Activated CD8-positive, alpha-beta memory T cell treated with anti-CD3 and anti-CD28 coated beads, Interleukin-2, amount 10 ng/mL, durations not matched to agents 7 days and 5 days (primary cell): ENCODE measurements at regions of chr22 and their contacts with region 1.

Region 1: DNA sequence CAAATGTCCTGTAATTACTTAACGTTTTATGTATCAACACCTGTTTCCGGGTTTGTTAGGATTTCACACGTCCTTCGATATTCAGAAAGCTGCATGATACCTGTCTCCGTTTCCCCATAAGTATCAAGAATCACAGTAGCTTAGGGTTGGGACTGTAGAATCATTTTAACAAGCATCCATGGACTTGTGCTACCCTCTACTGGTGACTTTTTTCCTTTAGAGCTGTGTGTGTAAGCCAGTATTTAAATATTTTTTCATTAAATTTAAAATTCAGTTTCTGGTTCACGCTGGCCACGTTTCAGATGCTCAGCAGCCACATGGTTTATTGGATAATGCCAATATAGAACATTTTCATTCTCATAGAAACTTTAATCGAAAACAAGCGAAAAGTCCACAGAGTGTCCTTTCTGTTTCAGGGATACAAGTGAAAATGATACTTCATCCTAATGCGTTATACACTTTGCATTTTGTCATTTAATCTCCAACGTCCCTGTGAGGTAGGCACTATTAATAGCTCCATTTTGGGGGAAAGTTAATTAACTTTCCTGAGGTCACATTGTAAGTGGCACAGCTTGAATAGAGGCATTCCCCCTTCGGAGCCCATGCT is 61.5 kb upstream of the SLC25A18 start:
- DNase-seq: no peak
- ATAC-seq: peak; percentile 73
- H3K4me3 Mint-ChIP-seq: no peak overlapping the region
- H3K27ac Mint-ChIP-seq: no peak overlapping the region
- H3K4me1 Mint-ChIP-seq: no peaks in the 10 kb centered on the region
- H3K27me3 Mint-ChIP-seq: peaks cover 11% of the 10 kb centered on the region

Region 2: GRCh38 chr22:17077255-17077654 is 424.5 kb before region 1 on chr22:
- CTCF ChIA-PET with region 1: interaction called, 31 read pairs
- DNase-seq: no peak
- ATAC-seq: no peak
- H3K4me3 Mint-ChIP-seq: no peak overlapping the region
- H3K27ac Mint-ChIP-seq: no peak overlapping the region
- H3K4me1 Mint-ChIP-seq: peaks cover 17% of the 10 kb centered on the region
- H3K27me3 Mint-ChIP-seq: peaks cover 50% of the 10 kb centered on the region

Region 3: DNA sequence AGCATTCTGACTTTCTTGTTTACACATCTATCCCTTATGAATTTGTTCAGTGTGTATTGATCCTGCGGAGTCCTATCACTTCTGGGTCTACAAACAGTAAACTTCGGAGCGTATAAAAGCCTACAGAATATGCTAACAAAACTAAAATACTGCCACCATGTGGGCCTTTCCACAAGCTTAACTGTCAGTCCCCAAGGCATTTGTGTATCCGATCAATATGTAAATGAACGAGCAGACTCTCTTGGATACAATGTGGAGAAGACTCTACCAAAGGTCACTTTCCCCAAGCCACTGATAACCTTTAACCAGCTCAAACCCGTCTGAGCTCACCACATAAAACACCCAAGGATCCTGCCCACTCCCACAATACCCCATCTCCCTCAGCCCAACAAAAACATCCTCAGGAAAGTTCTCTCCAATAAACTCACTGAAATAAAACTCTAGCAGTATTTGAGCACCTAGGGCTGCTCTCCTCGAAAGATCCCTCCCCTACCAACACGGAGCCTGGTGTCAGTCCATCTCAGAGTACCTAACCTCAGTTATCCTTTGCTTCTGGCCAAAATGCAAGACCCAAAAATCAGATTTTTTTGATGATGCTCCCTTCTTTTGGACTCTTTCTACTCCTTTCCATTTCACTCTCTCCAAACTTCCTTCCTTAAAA is 300.4 kb before region 1 on chr22:
- CTCF ChIA-PET with region 1: interaction called, 11 read pairs
- DNase-seq: no peak
- ATAC-seq: no peak
- H3K4me3 Mint-ChIP-seq: no peak overlapping the region
- H3K27ac Mint-ChIP-seq: no peak overlapping the region
- H3K4me1 Mint-ChIP-seq: no peaks in the 10 kb centered on the region
- H3K27me3 Mint-ChIP-seq: no peaks in the 10 kb centered on the region

Region 4: GRCh38 chr22:17460895-17461294 is 40.9 kb before region 1 on chr22:
- CTCF ChIA-PET with region 1: no interaction called
- DNase-seq: no peak
- ATAC-seq: no peak
- H3K4me3 Mint-ChIP-seq: no peak overlapping the region
- H3K27ac Mint-ChIP-seq: no peak overlapping the region
- H3K4me1 Mint-ChIP-seq: no peaks in the 10 kb centered on the region
- H3K27me3 Mint-ChIP-seq: peaks cover 32% of the 10 kb centered on the region

Region 5: DNA sequence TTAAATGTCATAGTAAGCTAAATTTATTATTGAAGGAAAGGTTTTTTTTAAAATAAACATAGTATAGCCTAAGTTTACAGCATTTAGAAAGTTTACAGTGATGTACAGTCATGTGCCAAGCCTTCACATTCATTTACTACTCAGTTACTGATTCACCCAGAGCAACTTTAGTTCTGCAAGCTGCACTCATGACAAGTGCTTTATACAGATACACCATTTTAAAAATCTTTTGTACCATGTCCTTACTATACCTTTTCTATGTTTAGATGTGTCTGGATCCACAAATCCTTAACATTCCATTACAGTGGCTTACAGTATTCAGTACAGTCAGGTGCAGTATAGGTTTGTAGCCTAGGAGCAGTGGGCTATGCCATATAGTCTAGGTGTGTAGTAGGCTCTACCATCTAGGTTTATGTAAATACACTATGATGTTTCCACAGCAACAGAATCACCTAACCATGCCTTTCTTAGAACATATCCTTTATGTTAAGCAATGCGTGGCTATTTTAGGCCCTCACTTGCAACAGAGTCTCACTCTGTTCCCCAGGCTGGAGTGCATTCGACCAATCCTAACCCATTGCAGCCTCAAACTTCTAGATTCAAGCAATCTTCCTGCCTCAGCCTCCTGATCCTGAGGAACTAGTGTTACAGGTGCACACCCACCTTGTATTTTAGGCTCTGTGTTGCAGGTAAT is 17.9 kb before region 1 on chr22:
- CTCF ChIA-PET with region 1: no interaction called
- DNase-seq: no peak
- ATAC-seq: no peak
- H3K4me3 Mint-ChIP-seq: no peak overlapping the region
- H3K27ac Mint-ChIP-seq: no peak overlapping the region
- H3K4me1 Mint-ChIP-seq: peaks cover 4% of the 10 kb centered on the region
- H3K27me3 Mint-ChIP-seq: peaks cover 12% of the 10 kb centered on the region

Region 6: GRCh38 chr22:17606496-17606895 is 104.7 kb after region 1 on chr22:
- CTCF ChIA-PET with region 1: no interaction called
- DNase-seq: no peak
- ATAC-seq: no peak
- H3K4me3 Mint-ChIP-seq: no peak overlapping the region
- H3K27ac Mint-ChIP-seq: no peak overlapping the region
- H3K4me1 Mint-ChIP-seq: peaks cover 5% of the 10 kb centered on the region
- H3K27me3 Mint-ChIP-seq: no peaks in the 10 kb centered on the region